ENCODE measurements at regions of chr2 and their contacts with region 1.

Region 1: GRCh38 chr2:88828397-88829137 is 137.1 kb downstream of the RPIA start:
- DNase-seq: no peak
- CTCF ChIP-seq: no peak

Region 2: GRCh38 chr2:89840844-89841840 is 1012.6 kb after region 1 on chr2:
- in situ Hi-C with region 1: loop called (anchors 10 kb)
- DNase-seq: peak; percentile 0
- CTCF ChIP-seq: no peak

Measured in GM13977 (cell line).